CD8-positive, alpha-beta T cell (primary cell): ENCODE measurements at regions of chr7 and their contacts with region 1.

Region 1: DNA sequence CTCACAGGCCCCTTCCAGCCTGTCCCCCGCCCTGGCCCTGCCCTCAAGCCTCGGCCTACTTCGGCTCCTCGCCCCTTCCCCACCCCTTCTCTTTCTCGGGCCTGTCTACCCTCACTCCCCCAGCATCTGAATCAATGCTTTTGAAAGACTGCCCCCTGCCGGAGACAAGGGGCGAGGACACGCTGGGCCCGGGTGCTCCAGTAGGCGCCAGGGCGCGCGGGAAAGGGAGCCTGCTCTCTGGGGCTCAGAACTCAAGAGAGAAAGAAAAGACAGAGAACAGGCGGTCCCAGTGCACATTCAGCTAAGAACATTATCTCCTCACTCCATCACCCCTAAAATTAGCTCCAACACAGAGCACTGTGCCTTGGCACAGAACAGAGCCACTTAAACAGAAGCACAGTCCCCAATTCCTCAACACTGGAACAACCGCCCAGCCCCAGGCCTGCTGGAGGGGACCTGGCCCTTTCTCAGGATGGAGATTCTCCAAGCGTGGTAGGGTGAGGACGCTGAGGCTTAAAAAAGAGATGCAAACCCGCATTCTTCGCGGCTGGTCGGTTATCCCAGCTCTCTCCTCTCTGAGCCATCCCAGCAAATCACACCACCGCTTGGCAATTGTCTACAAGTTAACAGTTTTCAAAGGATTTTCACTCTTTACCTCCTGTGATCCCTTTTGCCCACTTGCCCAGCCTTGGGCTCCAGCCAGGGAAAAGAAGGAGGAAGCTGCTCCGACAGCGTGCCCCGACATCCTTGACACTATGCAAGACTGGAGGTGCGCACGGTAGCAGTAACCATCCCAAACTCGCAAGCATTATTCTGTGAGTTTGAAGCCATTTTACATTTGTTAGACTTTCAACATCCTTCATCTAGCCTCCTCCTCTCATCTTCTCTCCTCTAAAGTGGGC is 2.1 kb downstream of the GIGYF1 start:
- DNase-seq: peak; percentile 63 to 88 (median 82)
- ATAC-seq: peak; percentile 71
- H3K4me3 ChIP-seq: peak overlapping the region in 1 of 2 experiments; percentile 72
- H3K4me3 Mint-ChIP-seq: peak overlapping the region; percentile 94
- H3K27ac ChIP-seq: no peak overlapping the region
- H3K27ac Mint-ChIP-seq: peak overlapping the region; percentile 90
- H3K4me1 ChIP-seq: peaks cover 53% of the 10 kb centered on the region
- H3K4me1 Mint-ChIP-seq: peaks cover 42% of the 10 kb centered on the region
- H3K27me3 ChIP-seq: no peaks in the 10 kb centered on the region
- H3K27me3 Mint-ChIP-seq: no peaks in the 10 kb centered on the region
- CTCF ChIP-seq: peak; percentile 83

Region 2: GRCh38 chr7:100119062-100119700 is 572.7 kb before region 1 on chr7 and contains the starts of genes CNPY4 and TAF6:
- CTCF ChIA-PET with region 1: no interaction called
- POLR2A ChIA-PET with region 1: no interaction called
- intact Hi-C with region 1: no loop called
- DNase-seq: peak; percentile 86 to 97 (median 96)
- ATAC-seq: peak; percentile 69
- H3K4me3 ChIP-seq: peak within 1 kb of the TSS; percentile 80 to 93
- H3K4me3 Mint-ChIP-seq: peak within 1 kb of the TSS; percentile 99
- H3K27ac ChIP-seq: peak within 1 kb of the TSS; percentile 88 to 93
- H3K27ac Mint-ChIP-seq: peak within 1 kb of the TSS; percentile 93
- H3K4me1 ChIP-seq: peaks cover 17% of the 10 kb centered on the region
- H3K4me1 Mint-ChIP-seq: peaks cover 28% of the 10 kb centered on the region
- H3K27me3 ChIP-seq: no peaks in the 10 kb centered on the region
- H3K27me3 Mint-ChIP-seq: no peaks in the 10 kb centered on the region
- CTCF ChIP-seq: no peak
- total RNA-seq, gene CNPY4: 21.4 to 24.4 TPM
- total RNA-seq, gene TAF6: 24.9 to 31.6 TPM

Region 3: DNA sequence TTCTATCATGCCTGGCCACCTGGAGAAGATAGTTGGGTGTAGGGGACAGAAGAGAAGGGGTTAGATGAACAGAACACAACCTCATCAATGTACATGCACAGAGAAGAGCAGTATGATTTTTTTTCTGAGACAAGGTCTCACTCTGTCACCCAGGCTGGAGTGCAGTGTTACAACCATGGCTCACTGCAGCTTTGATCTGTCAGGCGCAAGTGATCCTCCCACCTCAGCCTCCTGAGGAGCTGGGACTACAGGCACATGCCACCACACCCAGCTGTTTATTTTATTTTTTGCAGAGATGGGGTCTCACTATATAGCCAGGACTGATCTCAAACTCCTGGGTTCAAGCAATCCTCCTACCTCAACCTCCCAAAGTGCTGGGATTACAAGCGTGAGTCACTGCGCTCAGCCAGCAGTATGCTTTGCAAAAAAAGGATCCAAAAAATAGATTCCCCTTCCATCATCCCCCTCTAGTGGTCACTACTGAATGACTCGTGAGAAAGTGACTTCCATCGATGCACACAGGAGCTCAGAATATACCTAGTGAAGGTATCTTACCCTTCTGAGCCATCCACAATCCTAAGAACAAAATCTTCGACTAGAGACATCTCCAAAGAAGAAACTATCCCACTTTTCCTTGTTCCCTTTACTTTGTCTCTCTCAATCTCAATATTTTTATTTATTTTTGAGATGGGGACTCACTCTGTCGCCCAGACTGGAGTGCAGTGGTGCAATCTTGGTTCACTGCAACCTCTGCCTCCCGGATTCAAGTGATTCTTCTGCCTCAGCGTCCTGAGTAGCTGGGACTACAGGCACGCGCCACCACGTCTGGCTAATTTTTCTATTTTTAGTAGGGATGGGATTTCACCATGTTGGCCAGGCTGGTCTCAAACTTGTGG is 284.4 kb before region 1 on chr7:
- CTCF ChIA-PET with region 1: no interaction called
- POLR2A ChIA-PET with region 1: no interaction called
- intact Hi-C with region 1: no loop called
- DNase-seq: peak in 6 of 9 experiments; percentile 9 to 84 (median 38)
- ATAC-seq: peak; percentile 99
- H3K4me3 ChIP-seq: no peak overlapping the region
- H3K4me3 Mint-ChIP-seq: no peak overlapping the region
- H3K27ac ChIP-seq: no peak overlapping the region
- H3K27ac Mint-ChIP-seq: no peak overlapping the region
- H3K4me1 ChIP-seq: no peaks in the 10 kb centered on the region
- H3K4me1 Mint-ChIP-seq: peaks cover 6% of the 10 kb centered on the region
- H3K27me3 ChIP-seq: no peaks in the 10 kb centered on the region
- H3K27me3 Mint-ChIP-seq: no peaks in the 10 kb centered on the region
- CTCF ChIP-seq: peak; percentile 77

Region 4: GRCh38 chr7:100478966-100479665 is 212.8 kb before region 1 on chr7 and contains the start of gene TSC22D4:
- CTCF ChIA-PET with region 1: no interaction called
- POLR2A ChIA-PET with region 1: no interaction called
- intact Hi-C with region 1: loop called in 1 of 2 experiments (anchors 5 kb)
- DNase-seq: peak; percentile 85 to 97 (median 94)
- ATAC-seq: peak; percentile 69
- H3K4me3 ChIP-seq: peak within 1 kb of the TSS; percentile 82 to 96
- H3K4me3 Mint-ChIP-seq: peak within 1 kb of the TSS; percentile 93
- H3K27ac ChIP-seq: peak within 1 kb of the TSS; percentile 72 to 75
- H3K27ac Mint-ChIP-seq: peak within 1 kb of the TSS; percentile 89
- H3K4me1 ChIP-seq: peaks cover 54% of the 10 kb centered on the region
- H3K4me1 Mint-ChIP-seq: peaks cover 44% of the 10 kb centered on the region
- H3K27me3 ChIP-seq: no peaks in the 10 kb centered on the region
- H3K27me3 Mint-ChIP-seq: no peaks in the 10 kb centered on the region
- CTCF ChIP-seq: no peak
- total RNA-seq, gene TSC22D4: 30.7 to 32.3 TPM

Region 5: DNA sequence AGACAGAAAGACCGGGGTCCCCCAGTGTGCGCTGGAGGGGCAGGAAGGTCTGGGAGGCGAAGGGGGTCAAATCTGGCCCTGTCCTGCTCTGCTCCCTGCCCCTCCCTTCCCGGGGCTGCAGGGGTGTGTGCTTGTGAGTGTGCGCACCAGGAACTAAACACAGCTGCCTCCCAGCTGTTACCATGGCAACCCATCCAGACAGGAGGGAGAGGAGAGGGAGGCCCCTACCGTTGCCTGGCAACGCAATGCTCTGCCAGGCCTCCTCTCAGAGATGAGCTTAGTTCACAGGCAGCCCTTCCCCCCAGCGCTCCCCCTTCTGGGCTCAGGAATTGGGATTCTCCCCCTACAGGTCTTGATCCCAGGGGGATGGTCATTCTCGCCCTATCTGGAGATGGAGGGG is 202.1 kb before region 1 on chr7:
- CTCF ChIA-PET with region 1: no interaction called
- POLR2A ChIA-PET with region 1: no interaction called
- intact Hi-C with region 1: no loop called
- DNase-seq: peak in 4 of 9 experiments; percentile 24 to 66 (median 49)
- ATAC-seq: no peak
- H3K4me3 ChIP-seq: no peak overlapping the region
- H3K4me3 Mint-ChIP-seq: no peak overlapping the region
- H3K27ac ChIP-seq: no peak overlapping the region
- H3K27ac Mint-ChIP-seq: no peak overlapping the region
- H3K4me1 ChIP-seq: peaks cover 12% of the 10 kb centered on the region
- H3K4me1 Mint-ChIP-seq: peaks cover 15% of the 10 kb centered on the region
- H3K27me3 ChIP-seq: no peaks in the 10 kb centered on the region
- H3K27me3 Mint-ChIP-seq: no peaks in the 10 kb centered on the region
- CTCF ChIP-seq: no peak

Region 6: DNA sequence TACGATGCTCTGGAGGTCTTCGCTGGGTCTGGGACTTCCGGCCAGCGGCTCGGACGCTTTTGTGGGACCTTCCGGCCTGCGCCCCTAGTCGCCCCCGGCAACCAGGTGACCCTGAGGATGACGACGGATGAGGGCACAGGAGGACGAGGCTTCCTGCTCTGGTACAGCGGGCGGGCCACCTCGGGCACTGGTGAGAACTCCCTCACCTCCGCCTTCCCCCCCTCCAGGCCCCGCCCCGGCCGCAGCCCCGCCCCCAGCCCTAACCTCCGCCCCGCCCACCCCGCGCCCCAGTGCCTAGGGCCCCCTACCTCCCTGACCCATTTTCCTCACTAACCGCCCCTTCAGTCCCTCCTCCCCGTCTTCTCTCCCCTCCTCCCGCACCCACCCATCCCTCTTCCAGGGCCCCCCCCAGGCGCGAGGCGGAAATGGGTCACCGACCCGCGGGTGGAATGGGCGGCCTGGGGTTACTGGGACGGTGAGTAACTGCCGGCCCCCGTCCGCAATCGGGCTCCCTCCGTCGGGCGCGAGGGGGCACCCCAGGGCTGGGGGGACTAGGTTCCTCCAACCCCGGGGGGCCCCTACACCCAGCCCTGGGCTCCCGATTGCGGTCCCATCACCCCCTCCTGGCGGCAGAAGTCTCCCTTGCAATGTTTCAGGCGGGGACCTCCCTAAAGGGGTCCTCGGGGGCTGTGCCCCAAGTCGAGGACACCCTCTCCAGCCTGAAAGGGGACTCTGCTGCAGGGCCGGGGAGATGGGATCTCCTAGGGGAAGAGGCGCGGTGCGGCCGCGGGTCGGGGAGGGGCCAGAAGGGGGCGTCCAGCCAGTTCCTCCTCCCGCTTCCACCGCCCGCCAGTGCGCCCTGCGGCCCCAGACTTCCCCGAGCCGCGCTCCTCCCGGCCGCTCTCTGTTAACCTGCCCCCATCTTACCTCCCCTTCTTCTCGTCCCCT is 87.6 kb before region 1 on chr7:
- CTCF ChIA-PET with region 1: interaction called, 14 read pairs
- POLR2A ChIA-PET with region 1: interaction called, 4 read pairs
- intact Hi-C with region 1: loop called (anchors 1 kb)
- DNase-seq: peak; percentile 45 to 87 (median 77)
- ATAC-seq: peak; percentile 76
- H3K4me3 ChIP-seq: peak overlapping the region; percentile 62 to 79
- H3K4me3 Mint-ChIP-seq: peak overlapping the region; percentile 85
- H3K27ac ChIP-seq: peak overlapping the region; percentile 53 to 70
- H3K27ac Mint-ChIP-seq: peak overlapping the region; percentile 87
- H3K4me1 ChIP-seq: peaks cover 19% of the 10 kb centered on the region
- H3K4me1 Mint-ChIP-seq: peaks cover 22% of the 10 kb centered on the region
- H3K27me3 ChIP-seq: peaks cover 0 to 3% of the 10 kb centered on the region in 2 experiments
- H3K27me3 Mint-ChIP-seq: no peaks in the 10 kb centered on the region
- CTCF ChIP-seq: peak; percentile 50

Region 7: GRCh38 chr7:100626530-100627237 is 65.2 kb before region 1 on chr7:
- CTCF ChIA-PET with region 1: interaction called, 28 read pairs
- POLR2A ChIA-PET with region 1: interaction called, 3 read pairs
- intact Hi-C with region 1: loop called in 1 of 2 experiments (anchors 5 kb)
- DNase-seq: peak; percentile 82 to 94 (median 88)
- ATAC-seq: peak; percentile 99
- H3K4me3 ChIP-seq: peak overlapping the region; percentile 40 to 45
- H3K4me3 Mint-ChIP-seq: peak overlapping the region; percentile 70
- H3K27ac ChIP-seq: peak overlapping the region; percentile 56 to 78
- H3K27ac Mint-ChIP-seq: peak overlapping the region; percentile 80
- H3K4me1 ChIP-seq: peaks cover 14% of the 10 kb centered on the region
- H3K4me1 Mint-ChIP-seq: peaks cover 35% of the 10 kb centered on the region
- H3K27me3 ChIP-seq: no peaks in the 10 kb centered on the region
- H3K27me3 Mint-ChIP-seq: no peaks in the 10 kb centered on the region
- CTCF ChIP-seq: no peak

Region 8: DNA sequence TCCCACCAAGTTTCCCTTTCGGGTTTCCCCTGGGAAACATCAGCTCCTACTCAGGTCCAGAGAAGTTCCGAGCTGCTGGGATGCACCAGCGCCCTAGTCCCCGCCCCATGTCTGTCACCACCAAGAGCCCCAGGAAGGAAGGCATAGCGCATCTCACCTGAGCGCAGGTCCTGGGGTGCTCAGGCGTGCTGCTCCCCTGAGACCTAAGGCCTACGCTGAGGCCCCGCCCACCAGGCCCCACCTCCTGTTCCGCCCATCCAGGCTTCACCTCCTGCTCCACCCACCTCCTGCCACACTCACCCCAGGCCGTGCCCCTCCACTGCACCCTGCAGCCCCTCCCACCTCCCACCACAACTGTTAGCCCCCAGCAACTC is 49.4 kb before region 1 on chr7:
- CTCF ChIA-PET with region 1: interaction called, 14 read pairs
- POLR2A ChIA-PET with region 1: no interaction called
- intact Hi-C with region 1: no loop called
- DNase-seq: peak in 4 of 9 experiments; percentile 13 to 48 (median 32)
- ATAC-seq: peak; percentile 38
- H3K4me3 ChIP-seq: no peak overlapping the region
- H3K4me3 Mint-ChIP-seq: no peak overlapping the region
- H3K27ac ChIP-seq: no peak overlapping the region
- H3K27ac Mint-ChIP-seq: no peak overlapping the region
- H3K4me1 ChIP-seq: no peaks in the 10 kb centered on the region
- H3K4me1 Mint-ChIP-seq: no peaks in the 10 kb centered on the region
- H3K27me3 ChIP-seq: no peaks in the 10 kb centered on the region
- H3K27me3 Mint-ChIP-seq: peaks cover 2% of the 10 kb centered on the region
- CTCF ChIP-seq: no peak

Region 9: GRCh38 chr7:100793806-100794660 is 102.1 kb after region 1 on chr7:
- CTCF ChIA-PET with region 1: no interaction called
- POLR2A ChIA-PET with region 1: no interaction called
- intact Hi-C with region 1: no loop called
- DNase-seq: no peak
- ATAC-seq: no peak
- H3K4me3 ChIP-seq: no peak overlapping the region
- H3K4me3 Mint-ChIP-seq: no peak overlapping the region
- H3K27ac ChIP-seq: no peak overlapping the region
- H3K27ac Mint-ChIP-seq: no peak overlapping the region
- H3K4me1 ChIP-seq: no peaks in the 10 kb centered on the region
- H3K4me1 Mint-ChIP-seq: no peaks in the 10 kb centered on the region
- H3K27me3 ChIP-seq: peaks cover 0 to 2% of the 10 kb centered on the region in 2 experiments
- H3K27me3 Mint-ChIP-seq: peaks cover 14% of the 10 kb centered on the region
- CTCF ChIP-seq: no peak